ENCODE measurements at regions of chr19 and their contacts with region 1.

Region 1: DNA sequence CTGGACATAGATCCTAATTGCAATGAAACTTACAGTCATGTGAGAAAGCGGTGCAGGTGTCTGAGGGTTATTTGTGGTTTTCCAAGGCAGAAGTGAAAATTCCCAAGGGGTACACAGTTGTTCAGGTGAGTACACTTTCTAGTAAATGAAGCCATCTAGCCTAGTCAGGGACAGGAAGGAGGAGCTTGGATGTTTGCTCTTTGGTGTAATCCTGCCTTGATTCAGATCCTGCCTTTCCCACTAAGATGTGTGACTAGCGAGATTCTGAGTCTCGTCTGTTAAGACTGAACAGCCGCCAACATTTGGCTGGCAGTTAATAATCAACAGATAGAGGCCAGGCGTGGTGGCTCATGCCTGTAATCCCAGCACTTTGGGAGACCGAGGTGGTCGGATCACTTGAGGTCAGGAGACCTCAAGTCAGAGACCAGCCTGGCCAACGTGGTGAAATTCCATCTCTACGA is 2.5 kb downstream of the RPS9 start:
- DNase-seq: no peak
- H3K4me3 ChIP-seq: no peak overlapping the region
- H3K27ac ChIP-seq: peak overlapping the region in 1 of 2 donors; percentile 8
- H3K4me1 ChIP-seq: peaks cover 13% of the 10 kb centered on the region
- H3K27me3 ChIP-seq: no peaks in the 10 kb centered on the region
- CTCF ChIP-seq: no peak
- POLR2A ChIP-seq: no peak

Region 2: DNA sequence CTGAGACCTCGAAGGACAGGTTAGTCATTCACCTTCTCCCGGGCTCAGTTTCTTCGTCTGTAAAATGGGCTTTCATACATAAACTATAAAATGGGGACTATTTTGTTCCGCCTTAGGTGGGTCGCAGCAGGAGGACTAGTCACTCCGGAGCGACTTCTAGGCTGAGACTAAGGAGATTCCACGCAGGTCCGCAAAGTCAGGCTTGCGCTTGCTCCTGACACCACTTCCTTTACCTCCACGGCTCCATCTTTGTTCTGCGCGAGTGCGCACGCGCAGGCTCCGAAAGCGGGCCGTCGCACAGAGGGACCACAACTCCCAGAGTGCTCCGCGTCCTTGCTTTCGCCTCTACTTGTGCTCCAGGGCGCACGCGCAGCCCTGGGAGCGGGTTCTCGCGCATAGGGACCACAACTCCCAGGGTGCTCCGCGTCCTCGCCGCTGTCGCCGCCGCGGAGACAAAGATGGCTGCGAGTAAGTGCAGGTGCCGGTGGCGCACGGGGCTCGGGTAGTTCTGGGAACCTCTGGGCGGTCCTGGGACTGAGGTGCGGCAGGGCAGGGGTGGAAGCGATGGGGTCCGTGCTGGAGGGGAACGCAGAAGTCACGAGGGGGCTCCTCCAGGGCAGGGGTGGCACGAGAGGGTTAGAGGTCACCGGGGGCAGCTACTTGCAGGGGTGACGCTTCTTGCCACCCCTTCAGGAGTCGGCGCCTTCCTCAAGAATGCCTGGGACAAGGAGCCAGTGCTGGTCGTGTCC is 100.6 kb before region 1 on chr19 and contains the start of gene NDUFA3:
- intact Hi-C with region 1: no loop called
- DNase-seq: peak; percentile 97
- H3K4me3 ChIP-seq: peak within 1 kb of the TSS; percentile 64 to 84
- H3K27ac ChIP-seq: peak within 1 kb of the TSS; percentile 46 to 55
- H3K4me1 ChIP-seq: peaks cover 3% of the 10 kb centered on the region
- H3K27me3 ChIP-seq: no peaks in the 10 kb centered on the region
- CTCF ChIP-seq: peak in 1 of 4 experiments; percentile 20
- POLR2A ChIP-seq: peak; percentile 60
- total RNA-seq, gene NDUFA3: 39.4 to 48.5 TPM

Region 3: GRCh38 chr19:54189735-54190502 is 13.3 kb before region 1 on chr19:
- intact Hi-C with region 1: loop called (anchors 1 kb)
- DNase-seq: peak; percentile 100
- H3K4me3 ChIP-seq: peak overlapping the region; percentile 83 to 91
- H3K27ac ChIP-seq: peak overlapping the region; percentile 96 to 98
- H3K4me1 ChIP-seq: peaks cover 4% of the 10 kb centered on the region
- H3K27me3 ChIP-seq: no peaks in the 10 kb centered on the region
- CTCF ChIP-seq: no peak
- POLR2A ChIP-seq: no peak

Region 4: DNA sequence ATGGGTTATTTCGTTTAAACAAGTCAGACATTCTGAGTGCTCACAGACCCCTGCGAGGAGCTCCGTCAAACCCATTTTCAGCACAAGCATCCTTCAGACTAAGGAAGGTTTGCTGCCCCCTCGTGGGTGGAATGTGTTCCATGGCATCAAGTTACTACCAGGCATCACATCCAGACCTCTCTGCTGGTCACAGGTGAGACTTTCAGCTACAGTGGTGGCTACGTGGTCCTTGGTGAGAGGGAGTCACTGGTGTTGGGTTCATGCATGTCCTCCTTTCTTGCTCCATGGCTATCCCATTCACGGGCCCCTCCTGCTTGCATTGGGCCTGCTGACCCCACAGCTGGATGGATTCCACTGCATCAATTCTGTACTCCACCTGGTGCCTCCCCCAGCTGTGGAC is 63.0 kb after region 1 on chr19:
- intact Hi-C with region 1: no loop called
- DNase-seq: peak; percentile 35
- H3K4me3 ChIP-seq: no peak overlapping the region
- H3K27ac ChIP-seq: no peak overlapping the region
- H3K4me1 ChIP-seq: no peaks in the 10 kb centered on the region
- H3K27me3 ChIP-seq: no peaks in the 10 kb centered on the region
- CTCF ChIP-seq: peak in 2 of 4 experiments; percentile 30 to 50
- POLR2A ChIP-seq: no peak

Region 5: GRCh38 chr19:54573330-54573872 is 370.2 kb after region 1 on chr19 and contains the start of gene LILRA2:
- intact Hi-C with region 1: no loop called
- DNase-seq: no peak
- H3K4me3 ChIP-seq: no peak within 1 kb of the TSS
- H3K27ac ChIP-seq: no peak within 1 kb of the TSS
- H3K4me1 ChIP-seq: no peaks in the 10 kb centered on the region
- H3K27me3 ChIP-seq: peaks cover 5% of the 10 kb centered on the region
- CTCF ChIP-seq: no peak
- POLR2A ChIP-seq: no peak
- total RNA-seq, gene LILRA2: 1.6 to 2.5 TPM